H1 (cell line): ENCODE measurements at regions of chr16 and their contacts with region 1.

Region 1: GRCh38 chr16:68800257-68800875 is 43.0 kb upstream of the TANGO6 start:
- DNase-seq: peak; percentile 60 to 82
- H3K4me3 ChIP-seq: no peak overlapping the region
- H3K27ac ChIP-seq: no peak overlapping the region
- H3K4me1 ChIP-seq: peaks cover 4 to 11% (median 5%) of the 10 kb centered on the region in 4 experiments; a peak in 4 of 7 replicates
- H3K27me3 ChIP-seq: no peaks in the 10 kb centered on the region; a peak in 1 of 7 replicates
- CTCF ChIP-seq: peak; percentile 63 to 88 (median 80)
- EP300 ChIP-seq: no peak
- POLR2A ChIP-seq: no peak
- RAD21 ChIP-seq: peak; percentile 91 to 93

Region 2: GRCh38 chr16:68658258-68659008 is 141.9 kb before region 1 on chr16:
- CTCF ChIA-PET with region 1: no interaction called
- POLR2A ChIA-PET with region 1: no interaction called
- DNase-seq: no peak
- H3K4me3 ChIP-seq: no peak overlapping the region
- H3K27ac ChIP-seq: no peak overlapping the region
- H3K4me1 ChIP-seq: peaks cover 0 to 6% (median 0%) of the 10 kb centered on the region in 4 experiments; a peak in 1 of 7 replicates
- H3K27me3 ChIP-seq: no peaks in the 10 kb centered on the region
- CTCF ChIP-seq: no peak
- EP300 ChIP-seq: no peak
- POLR2A ChIP-seq: no peak
- RAD21 ChIP-seq: no peak

Region 3: DNA sequence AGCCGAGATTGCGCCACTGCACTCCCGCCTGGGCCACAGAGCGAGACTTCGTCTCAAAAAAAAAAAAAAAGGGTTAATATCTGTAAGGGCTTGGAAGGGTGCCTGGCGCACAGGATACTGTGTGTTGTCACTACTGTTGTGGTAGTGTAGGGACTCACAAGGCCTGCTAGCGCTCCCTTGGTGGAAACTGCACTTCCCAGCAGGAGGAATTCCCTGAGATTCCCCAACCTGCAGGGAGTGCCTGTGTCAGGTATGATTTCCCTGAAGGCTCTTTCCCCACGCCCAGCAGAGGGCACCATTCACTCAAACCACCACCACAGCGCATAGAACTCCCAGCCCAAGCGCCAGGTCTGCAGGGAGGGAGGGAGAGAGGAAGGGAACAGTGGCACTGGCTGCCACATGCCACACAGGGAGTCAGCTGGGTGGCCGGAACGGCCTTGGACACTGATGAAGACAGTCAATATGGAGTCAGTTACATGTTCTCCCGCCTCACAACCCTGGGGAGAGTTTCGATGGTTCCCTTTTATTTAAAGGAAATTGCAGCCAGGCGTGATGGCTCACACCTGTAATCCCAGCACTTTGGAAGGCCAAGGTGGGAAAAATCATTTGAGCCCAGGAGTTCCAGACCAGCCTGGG is 96.0 kb before region 1 on chr16:
- CTCF ChIA-PET with region 1: interaction called, 71 read pairs
- POLR2A ChIA-PET with region 1: interaction called, 3 read pairs
- DNase-seq: peak; percentile 84 to 92
- H3K4me3 ChIP-seq: no peak overlapping the region
- H3K27ac ChIP-seq: no peak overlapping the region
- H3K4me1 ChIP-seq: peaks cover 0 to 10% (median 3%) of the 10 kb centered on the region in 4 experiments; a peak in 4 of 7 replicates
- H3K27me3 ChIP-seq: no peaks in the 10 kb centered on the region
- CTCF ChIP-seq: peak; percentile 87 to 96 (median 96)
- EP300 ChIP-seq: peak in 1 of 2 experiments; percentile 20; a peak in 2 of 3 replicates
- POLR2A ChIP-seq: no peak
- RAD21 ChIP-seq: peak; percentile 98

Region 4: DNA sequence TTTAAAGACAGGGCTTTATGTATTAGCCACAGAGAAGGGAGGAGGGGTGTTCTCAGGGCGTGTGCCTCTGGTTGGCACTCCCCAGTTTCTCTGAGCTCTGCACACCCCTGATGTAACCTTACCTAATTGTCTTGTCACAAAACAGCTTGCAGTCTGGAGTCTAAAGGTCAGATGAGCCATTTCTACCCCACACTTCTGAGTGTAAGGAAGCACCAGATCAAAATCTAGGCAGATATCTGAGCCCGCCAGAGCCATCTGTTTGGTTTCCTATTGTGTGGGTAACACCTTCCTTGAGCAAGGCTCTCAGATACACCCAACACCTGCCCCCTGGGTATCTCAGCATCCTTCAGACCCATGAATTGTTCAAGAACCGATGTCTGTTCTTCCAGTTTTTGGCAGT is 47.8 kb before region 1 on chr16:
- CTCF ChIA-PET with region 1: interaction called, 13 read pairs
- POLR2A ChIA-PET with region 1: interaction called, 3 read pairs
- DNase-seq: no peak
- H3K4me3 ChIP-seq: no peak overlapping the region
- H3K27ac ChIP-seq: no peak overlapping the region
- H3K4me1 ChIP-seq: peaks cover 0 to 8% (median 4%) of the 10 kb centered on the region in 4 experiments; a peak in 3 of 7 replicates
- H3K27me3 ChIP-seq: no peaks in the 10 kb centered on the region
- CTCF ChIP-seq: no peak
- EP300 ChIP-seq: no peak
- POLR2A ChIP-seq: no peak
- RAD21 ChIP-seq: no peak

Region 5: DNA sequence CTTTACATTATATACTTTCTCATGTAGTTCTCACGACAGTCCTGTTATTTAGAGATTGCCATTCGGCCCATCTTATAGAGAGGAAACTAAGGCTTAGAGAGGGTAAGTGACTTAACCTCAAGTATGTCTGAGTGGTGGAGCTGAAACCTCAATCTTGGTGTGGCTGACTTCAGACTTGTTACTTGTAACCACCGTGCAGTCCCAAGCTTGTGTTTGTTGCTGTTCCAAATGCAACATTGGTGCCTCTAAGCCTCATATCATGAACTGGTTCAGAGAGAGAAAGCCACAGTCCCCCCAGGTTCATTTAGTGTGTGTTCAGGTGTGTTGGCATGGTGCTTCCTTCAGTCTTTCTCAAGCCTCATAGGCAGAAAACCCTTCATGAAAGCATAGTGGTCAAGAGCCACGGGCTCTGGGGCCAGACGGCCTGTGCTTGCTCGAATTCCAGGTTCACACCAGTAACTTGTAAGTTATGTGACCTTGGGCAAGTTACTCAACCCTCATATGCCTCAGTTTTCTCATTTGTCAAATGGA is 23.5 kb before region 1 on chr16:
- CTCF ChIA-PET with region 1: interaction called, 21 read pairs
- POLR2A ChIA-PET with region 1: no interaction called
- DNase-seq: no peak
- H3K4me3 ChIP-seq: no peak overlapping the region
- H3K27ac ChIP-seq: no peak overlapping the region
- H3K4me1 ChIP-seq: peaks cover 7 to 26% (median 24%) of the 10 kb centered on the region in 4 experiments
- H3K27me3 ChIP-seq: no peaks in the 10 kb centered on the region
- CTCF ChIP-seq: no peak
- EP300 ChIP-seq: no peak
- POLR2A ChIP-seq: no peak
- RAD21 ChIP-seq: no peak

Region 6: DNA sequence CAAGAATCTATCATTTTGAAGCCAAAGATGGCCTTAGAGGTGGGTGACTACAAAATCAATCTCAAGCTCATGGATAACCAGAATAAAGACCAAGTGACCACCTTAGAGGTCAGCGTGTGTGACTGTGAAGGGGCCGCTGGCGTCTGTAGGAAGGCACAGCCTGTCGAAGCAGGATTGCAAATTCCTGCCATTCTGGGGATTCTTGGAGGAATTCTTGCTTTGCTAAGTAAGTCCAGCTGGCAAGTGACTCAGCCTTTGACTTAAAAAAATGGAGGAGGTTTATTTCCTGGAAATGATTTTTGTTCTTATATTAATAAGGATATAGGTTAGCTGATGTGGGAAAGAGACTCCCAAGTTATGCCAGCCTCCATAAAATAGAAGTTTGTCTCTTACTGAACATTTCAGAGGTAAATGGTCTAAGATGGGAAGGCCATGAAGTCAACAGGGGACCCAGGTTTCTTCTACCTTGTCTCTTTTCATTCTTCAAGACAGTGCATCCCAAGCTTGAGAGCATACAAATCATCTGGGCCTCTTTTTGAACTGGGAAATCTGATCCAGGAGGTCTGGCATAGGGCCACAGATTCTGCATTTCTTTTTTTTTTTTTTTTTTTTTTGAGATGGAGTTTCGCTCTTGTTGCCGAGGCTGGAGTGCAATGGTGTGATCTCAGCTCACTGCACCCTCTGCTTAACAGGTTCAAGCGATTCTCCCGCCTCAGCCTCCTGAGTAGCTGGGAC is 23.2 kb after region 1 on chr16:
- CTCF ChIA-PET with region 1: interaction called, 11 read pairs
- POLR2A ChIA-PET with region 1: interaction called, 5 read pairs
- DNase-seq: no peak
- H3K4me3 ChIP-seq: no peak overlapping the region
- H3K27ac ChIP-seq: no peak overlapping the region
- H3K4me1 ChIP-seq: no peaks in the 10 kb centered on the region
- H3K27me3 ChIP-seq: no peaks in the 10 kb centered on the region
- CTCF ChIP-seq: no peak
- EP300 ChIP-seq: no peak
- POLR2A ChIP-seq: no peak
- RAD21 ChIP-seq: no peak